ENCODE measurements at regions of chr10 and their contacts with region 1.

Region 1: DNA sequence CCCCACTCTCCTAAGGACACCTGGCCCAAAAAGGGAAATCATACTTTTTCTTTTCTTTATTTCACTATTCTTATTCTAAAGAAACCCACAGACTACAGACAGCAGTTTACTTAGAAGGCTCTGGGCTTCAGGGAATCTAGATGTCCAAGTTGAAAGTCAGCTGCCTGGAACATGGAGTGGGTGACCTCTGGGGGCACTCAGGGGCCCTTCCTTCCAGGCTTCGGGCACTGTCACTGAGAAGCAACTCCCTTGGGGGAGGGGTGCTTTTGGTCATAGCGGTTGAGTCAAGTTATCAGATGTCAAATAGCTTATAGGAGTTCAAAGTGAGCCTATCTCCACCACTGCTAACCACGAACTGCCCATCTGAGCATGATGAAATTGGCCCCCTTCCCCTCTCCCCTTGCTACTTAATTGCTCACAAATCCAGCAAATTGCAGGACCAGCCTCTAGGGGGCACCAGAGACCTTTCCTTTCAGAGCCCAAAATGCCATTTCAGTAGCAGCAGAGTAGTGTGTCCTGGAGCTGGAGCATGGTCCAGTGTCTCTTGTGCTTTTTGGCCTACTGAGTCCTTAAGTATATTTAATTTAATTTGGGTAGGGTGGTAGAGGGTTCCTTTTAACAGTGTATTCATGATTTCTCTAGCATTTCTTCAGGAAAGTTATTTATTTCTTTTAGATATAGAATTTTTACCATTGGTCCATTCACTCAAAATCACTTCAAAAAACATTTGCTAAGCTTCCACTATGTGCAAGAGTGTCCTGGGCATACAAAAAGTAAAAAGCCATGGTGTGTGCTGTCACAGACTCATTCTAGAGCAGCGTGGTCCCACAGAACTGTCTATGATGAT is 463.8 kb downstream of the KCNMA1 start:
- DNase-seq: peak in 3 of 4 donors; percentile 51 to 82 (median 70)
- ATAC-seq: peak; percentile 96
- H3K4me3 ChIP-seq: no peak overlapping the region
- H3K27ac ChIP-seq: no peak overlapping the region
- H3K4me1 ChIP-seq: no peaks in the 10 kb centered on the region
- H3K27me3 ChIP-seq: peaks cover 0 to 10% of the 10 kb centered on the region in 2 donors
- CTCF ChIP-seq: peak; percentile 78 to 89

Region 2: DNA sequence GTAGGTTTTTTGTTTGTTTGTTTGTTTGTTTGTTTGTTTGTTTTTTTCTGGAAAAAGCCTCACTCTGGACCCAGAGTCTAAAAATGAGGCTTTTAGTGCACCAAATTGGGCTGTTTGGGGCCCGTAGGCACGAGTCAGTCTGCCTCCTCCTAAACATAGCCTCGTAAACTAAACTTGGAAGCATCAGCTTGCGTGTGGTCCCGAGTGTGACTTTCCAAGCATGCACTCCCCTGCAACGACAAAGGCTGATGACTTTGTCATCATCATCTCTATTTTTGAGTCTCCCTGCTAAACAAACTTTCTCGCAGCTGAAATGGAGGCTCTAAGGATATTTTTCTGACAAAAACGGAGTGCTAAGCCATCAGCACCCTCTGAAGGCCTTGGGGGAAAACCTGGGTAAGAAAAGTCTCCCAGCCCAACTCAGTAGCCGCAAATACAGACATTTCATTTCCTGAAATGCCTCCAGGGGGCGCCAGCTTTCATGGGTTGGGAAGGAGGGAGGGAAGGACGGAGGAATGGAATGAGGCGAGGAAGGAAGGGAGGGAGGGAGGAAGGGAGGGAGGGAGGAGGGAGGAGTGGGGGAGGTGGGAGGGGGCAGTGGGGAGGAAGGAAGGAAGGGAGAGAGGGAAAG is 217.9 kb after region 1 on chr10:
- intact Hi-C with region 1: loop called in 1 of 2 experiments (anchors 10 kb)
- DNase-seq: peak in 3 of 4 donors; percentile 51 to 79 (median 73)
- ATAC-seq: peak; percentile 78
- H3K4me3 ChIP-seq: no peak overlapping the region
- H3K27ac ChIP-seq: no peak overlapping the region
- H3K4me1 ChIP-seq: no peaks in the 10 kb centered on the region
- H3K27me3 ChIP-seq: peaks cover 0 to 14% of the 10 kb centered on the region in 2 donors
- CTCF ChIP-seq: peak; percentile 36 to 42

Region 3: DNA sequence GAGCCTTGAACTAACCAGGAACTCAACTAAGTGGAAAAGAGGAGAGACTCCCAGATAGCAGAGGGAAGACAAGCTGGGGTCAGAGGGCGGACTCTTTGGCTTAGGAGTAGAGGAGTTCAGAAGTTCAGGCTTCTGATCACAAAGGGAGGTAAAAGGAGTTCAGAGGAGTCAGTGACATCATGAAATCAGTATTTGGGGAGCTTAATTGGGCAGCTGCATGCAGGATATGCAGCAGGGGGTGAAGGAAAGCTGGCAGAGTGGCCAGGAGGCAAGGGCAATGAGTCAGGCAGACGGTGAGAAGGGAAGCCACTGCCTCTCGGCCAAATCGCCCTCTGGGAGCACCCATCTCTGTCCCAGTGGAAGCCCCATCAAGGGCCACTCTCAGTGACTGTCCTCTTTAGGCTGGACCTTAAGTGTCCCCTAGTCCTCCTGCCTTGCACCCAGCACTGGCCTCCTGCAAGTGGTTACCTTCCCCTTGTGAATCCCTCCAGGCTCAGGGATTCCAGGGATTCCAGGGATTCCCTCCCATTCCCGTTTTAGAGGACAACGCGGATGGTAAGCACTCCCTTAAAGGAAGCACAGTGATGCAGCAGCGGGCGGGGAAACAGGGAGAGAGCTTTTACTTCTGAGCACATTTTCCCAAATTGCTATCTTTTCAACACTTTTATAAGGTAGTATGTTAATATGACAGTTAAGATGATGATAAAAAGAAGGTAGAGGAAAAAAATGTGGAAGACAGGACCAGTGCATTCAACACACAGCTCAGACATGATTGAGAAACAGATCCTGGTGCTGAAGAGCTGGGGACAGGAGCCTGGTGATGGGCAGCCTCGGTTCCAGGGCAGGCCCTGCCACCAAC is 391.1 kb after region 1 on chr10:
- intact Hi-C with region 1: no loop called
- DNase-seq: no peak
- ATAC-seq: no peak
- H3K4me3 ChIP-seq: no peak overlapping the region
- H3K27ac ChIP-seq: no peak overlapping the region
- H3K4me1 ChIP-seq: no peaks in the 10 kb centered on the region
- H3K27me3 ChIP-seq: peaks cover 0 to 38% of the 10 kb centered on the region in 2 donors
- CTCF ChIP-seq: no peak

Region 4: DNA sequence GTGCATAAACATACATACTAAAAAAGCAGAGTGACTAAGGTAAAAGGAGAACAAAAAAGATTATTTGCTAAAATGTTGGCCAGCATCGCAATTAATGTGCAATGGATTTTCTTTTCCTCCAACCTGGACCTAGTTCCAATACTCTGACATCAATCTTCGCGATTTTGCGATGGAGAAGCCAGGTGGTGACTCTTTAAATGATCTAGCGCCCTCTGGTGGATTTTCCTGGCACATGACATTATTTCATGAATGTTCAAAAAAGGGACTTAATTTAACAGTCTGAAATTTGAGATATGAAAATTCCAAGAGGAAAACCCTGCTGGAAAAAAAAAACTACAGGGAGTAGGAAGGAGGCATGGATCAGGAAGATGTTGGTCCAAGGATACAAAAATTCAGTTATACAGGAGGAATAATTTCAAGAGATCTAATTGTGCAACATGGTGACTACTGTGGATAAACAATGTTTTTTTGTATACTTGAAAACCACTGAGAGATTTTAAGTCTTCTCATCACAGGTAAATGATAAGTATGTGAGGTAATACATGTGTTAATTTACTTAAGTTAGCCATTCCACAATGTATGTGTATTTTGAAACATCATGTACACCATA is 468.1 kb after region 1 on chr10:
- intact Hi-C with region 1: loop called (anchors 5 to 10 kb)
- DNase-seq: peak in 2 of 4 donors; percentile 66 to 72
- ATAC-seq: peak; percentile 69
- H3K4me3 ChIP-seq: no peak overlapping the region
- H3K27ac ChIP-seq: no peak overlapping the region
- H3K4me1 ChIP-seq: peaks cover 0 to 12% of the 10 kb centered on the region in 2 donors
- H3K27me3 ChIP-seq: peaks cover 23 to 77% of the 10 kb centered on the region in 2 donors
- CTCF ChIP-seq: peak; percentile 71 to 72

Region 5: DNA sequence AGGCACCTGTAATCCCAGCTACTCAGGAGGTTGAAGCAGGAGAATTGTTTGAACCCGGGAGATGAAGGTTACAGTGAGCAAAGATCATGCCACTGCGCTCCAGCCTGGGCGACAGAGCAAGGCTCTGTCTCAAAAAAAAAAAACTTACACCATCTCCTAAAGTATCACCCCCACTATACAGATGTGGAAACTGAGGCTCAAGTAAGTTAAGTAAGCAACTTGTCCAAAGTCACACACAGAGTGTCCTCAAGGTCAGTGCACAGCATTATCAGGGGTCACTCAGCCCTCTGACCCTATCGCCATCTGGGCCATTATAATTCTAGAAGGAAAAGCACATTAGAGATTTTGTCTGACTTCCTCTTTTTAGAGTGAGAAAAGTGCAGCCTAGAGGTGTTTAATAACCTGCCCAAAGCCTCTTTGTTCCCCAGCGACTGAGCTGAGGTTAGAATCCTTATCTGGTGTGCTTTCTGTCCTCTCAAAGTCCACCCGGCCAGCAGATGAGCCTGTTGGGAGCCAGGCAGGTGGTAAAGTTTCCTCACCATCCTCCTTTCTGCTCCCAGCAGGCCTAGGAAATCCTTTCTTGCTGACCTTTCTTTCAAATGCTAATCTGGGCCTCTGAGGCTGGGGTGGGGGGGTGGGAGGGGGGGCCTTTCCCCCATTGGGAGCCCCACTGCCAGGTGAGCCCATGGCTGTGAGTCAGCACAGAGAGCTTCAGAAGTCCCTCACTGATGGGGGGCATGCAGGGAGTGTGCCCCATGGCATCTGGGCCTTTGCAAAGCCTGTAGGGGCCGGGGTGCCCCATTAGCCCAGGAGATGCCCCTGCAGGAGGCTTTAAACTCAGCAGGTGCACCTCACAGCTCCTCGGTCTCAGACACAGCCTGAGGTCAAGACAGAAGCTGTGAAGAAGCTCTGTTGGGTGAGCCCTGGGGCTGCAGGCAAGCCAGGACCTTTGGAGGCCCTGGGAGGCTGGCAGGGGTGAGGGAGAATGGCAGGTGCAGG is 475.8 kb after region 1 on chr10:
- intact Hi-C with region 1: loop called (anchors 5 to 10 kb)
- DNase-seq: no peak
- ATAC-seq: no peak
- H3K4me3 ChIP-seq: no peak overlapping the region
- H3K27ac ChIP-seq: no peak overlapping the region
- H3K4me1 ChIP-seq: no peaks in the 10 kb centered on the region
- H3K27me3 ChIP-seq: peaks cover 0 to 35% of the 10 kb centered on the region in 2 donors
- CTCF ChIP-seq: no peak

Measured in left lung (tissue), 14 donors.